Heart left ventricle (tissue), 16 donors: ENCODE measurements at regions of chr7 and their contacts with region 1.

Region 1: DNA sequence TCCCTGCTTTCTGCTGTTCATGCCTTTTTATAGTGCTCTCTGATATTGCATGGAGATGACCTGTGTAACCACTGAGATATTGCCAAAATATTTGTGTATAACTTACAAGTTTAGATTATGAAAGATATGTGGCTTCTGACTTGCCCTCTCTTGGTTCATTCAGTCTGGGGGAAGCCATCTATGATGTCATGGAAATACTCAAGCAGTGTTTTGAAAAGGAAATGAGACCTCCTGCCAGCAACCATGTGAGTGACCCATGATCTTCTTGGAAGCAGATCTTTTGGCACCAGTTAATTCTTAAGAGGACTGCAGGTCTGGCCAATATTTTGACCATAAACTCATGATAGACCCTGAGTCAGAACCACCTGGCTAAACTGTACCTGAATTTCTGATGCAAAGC is 183.0 kb downstream of the THSD7A start:
- DNase-seq: peak in 1 of 5 donors; percentile 15
- ATAC-seq: peak in 2 of 4 donors; percentile 46 to 78
- H3K4me3 ChIP-seq: no peak overlapping the region
- H3K27ac ChIP-seq: no peak overlapping the region
- H3K4me1 ChIP-seq: peaks cover 0 to 5% (median 0%) of the 10 kb centered on the region in 12 donors
- H3K27me3 ChIP-seq: no peaks in the 10 kb centered on the region
- CTCF ChIP-seq: no peak
- POLR2A ChIP-seq: no peak

Region 2: GRCh38 chr7:11458736-11459483 is 190.1 kb before region 1 on chr7:
- intact Hi-C with region 1: no loop called
- DNase-seq: peak in 1 of 5 donors; percentile 14
- ATAC-seq: peak; percentile 51 to 92 (median 72)
- H3K4me3 ChIP-seq: no peak overlapping the region
- H3K27ac ChIP-seq: peak overlapping the region in 5 of 12 donors; percentile 0 to 45 (median 15)
- H3K4me1 ChIP-seq: peaks cover 0 to 13% (median 2%) of the 10 kb centered on the region in 12 donors
- H3K27me3 ChIP-seq: no peaks in the 10 kb centered on the region
- CTCF ChIP-seq: no peak
- POLR2A ChIP-seq: no peak

Region 3: DNA sequence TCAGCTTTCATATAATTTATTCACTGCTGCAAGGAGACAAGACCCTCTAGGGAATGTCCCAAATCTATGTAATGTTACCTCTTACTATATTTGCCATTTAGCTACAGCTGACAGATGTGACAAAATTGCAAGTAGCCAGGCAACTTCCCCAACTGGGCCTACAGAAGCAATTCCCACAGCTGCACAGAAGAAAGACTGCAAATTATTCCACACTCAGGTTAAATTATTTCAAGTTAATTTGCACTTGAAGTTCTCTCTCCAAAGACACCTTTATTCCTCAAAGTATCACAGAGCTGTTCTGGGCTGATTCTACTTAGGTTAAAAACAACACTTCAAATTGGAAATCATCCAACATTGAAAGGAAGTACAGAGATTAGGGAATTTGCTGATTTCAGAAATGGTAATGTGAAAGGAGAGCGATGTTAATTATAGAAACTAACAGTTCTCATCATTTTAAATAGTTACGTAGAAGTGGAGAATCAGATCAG is 49.4 kb after region 1 on chr7:
- intact Hi-C with region 1: loop called in 1 of 10 experiments (anchors 10 kb)
- DNase-seq: no peak
- ATAC-seq: no peak
- H3K4me3 ChIP-seq: peak overlapping the region in 4 of 12 donors; percentile 8 to 22 (median 16)
- H3K27ac ChIP-seq: peak overlapping the region in 2 of 12 donors; percentile 4 to 23
- H3K4me1 ChIP-seq: peaks cover 0 to 10% (median 0%) of the 10 kb centered on the region in 12 donors
- H3K27me3 ChIP-seq: no peaks in the 10 kb centered on the region
- CTCF ChIP-seq: no peak
- POLR2A ChIP-seq: no peak